ENCODE measurements at regions of chr19 and their contacts with region 1.

Region 1: GRCh38 chr19:48713864-48714758 is 5.4 kb downstream of the MAMSTR start:
- DNase-seq: peak; percentile 95 to 100 (median 98)
- H3K4me3 ChIP-seq: peak overlapping the region; percentile 58 to 100 (median 87)
- H3K27ac ChIP-seq: peak overlapping the region; percentile 60 to 95 (median 90)
- H3K27me3 ChIP-seq: no peaks in the 10 kb centered on the region
- CTCF ChIP-seq: peak in 39 of 56 donors; percentile 4 to 60 (median 28)

Region 2: DNA sequence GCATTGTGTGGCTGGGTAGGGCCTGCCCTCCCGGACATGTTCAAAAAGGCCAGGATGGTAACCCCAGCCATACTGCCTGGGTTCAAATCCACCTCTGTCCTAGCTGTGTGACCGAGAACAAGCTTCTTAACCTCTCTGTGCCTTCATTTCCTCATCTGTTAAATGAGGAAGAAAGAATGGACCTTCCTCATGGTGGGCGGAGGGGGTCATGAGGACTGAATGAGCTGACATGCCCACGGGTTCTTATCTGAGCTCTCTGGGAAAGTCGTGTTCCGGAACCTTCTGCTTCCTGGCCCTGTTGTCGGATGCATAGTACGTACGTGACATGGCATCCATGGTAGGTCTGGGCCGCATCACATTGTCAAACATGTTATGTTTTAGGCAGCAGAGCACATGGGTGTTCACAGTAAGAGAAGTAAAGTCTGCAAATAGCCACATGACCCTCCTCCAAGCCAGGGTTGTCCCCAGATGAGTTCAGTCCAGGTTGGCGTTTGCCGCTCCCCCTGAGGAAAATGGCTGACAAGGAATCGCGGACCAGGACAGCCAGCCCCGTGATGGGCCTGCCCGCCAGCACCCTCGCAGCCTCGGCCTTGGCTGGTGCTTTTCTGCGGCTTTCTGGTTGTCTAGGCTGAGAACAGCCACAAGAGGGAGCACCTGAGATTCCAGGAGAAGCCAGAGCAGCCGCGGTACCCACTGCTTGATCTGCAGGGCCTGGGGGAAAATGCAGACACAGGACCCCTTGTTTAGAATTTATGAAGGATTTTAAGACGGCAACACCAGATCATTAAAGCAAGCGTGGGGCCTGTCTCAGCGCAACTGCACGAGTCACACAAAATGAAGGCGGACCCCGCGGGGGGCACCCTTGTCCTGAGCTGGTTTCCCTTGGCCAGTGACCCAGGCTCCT is 38.9 kb before region 1 on chr19:
- intact Hi-C with region 1: loop called (anchors 5 kb)
- DNase-seq: peak; percentile 70 to 93 (median 87)
- H3K4me3 ChIP-seq: peak overlapping the region in 23 of 59 donors; percentile 3 to 39 (median 22)
- H3K27ac ChIP-seq: peak overlapping the region in 49 of 59 donors; percentile 9 to 86 (median 68)
- H3K27me3 ChIP-seq: no peaks in the 10 kb centered on the region
- CTCF ChIP-seq: peak; percentile 72 to 95 (median 88)

Region 3: DNA sequence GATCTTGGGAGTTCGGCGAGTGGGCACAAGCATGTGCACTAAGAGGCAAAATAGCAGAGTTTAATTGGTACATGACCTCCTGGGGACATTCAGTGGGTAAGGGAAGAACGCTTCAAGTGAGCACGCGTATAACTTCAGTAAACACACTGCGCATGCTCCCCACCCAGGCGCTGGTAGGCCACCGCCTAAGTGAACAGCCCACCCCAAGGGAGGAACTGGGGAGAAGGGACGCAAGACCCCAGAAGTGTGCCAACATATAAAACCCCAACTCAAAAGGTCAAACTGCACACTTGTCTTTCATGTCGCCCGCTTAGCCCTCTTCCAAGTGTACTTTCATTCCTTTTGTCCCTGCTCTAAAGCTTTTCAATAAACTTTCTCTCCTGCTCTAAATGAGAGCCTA is 30.8 kb before region 1 on chr19:
- intact Hi-C with region 1: loop called (anchors 5 kb)
- DNase-seq: peak in 8 of 10 donors; percentile 29 to 72 (median 56)
- H3K4me3 ChIP-seq: peak overlapping the region in 29 of 59 donors; percentile 12 to 47 (median 31)
- H3K27ac ChIP-seq: peak overlapping the region in 36 of 59 donors; percentile 3 to 75 (median 44)
- H3K27me3 ChIP-seq: no peaks in the 10 kb centered on the region
- CTCF ChIP-seq: peak in 1 of 56 donors; percentile 13

Region 4: GRCh38 chr19:48738557-48739399 is 24.7 kb after region 1 on chr19:
- intact Hi-C with region 1: no loop called
- DNase-seq: peak; percentile 76 to 97 (median 85)
- H3K4me3 ChIP-seq: peak overlapping the region; percentile 36 to 75 (median 65)
- H3K27ac ChIP-seq: peak overlapping the region in 56 of 59 donors; percentile 50 to 92 (median 78)
- H3K27me3 ChIP-seq: no peaks in the 10 kb centered on the region
- CTCF ChIP-seq: peak in 38 of 56 donors; percentile 7 to 65 (median 35)